Naive thymus-derived CD4-positive, alpha-beta T cell (primary cell): ENCODE measurements at regions of chr6 and their contacts with region 1.

Region 1: GRCh38 chr6:17599885-17600526 is at the start of gene FAM8A1:
- DNase-seq: peak; percentile 91 to 97 (median 94)
- ATAC-seq: peak; percentile 97
- H3K4me3 ChIP-seq: peak within 1 kb of the TSS; percentile 49
- H3K4me3 Mint-ChIP-seq: peak within 1 kb of the TSS; percentile 85 to 97 (median 94)
- H3K27ac ChIP-seq: peak within 1 kb of the TSS; percentile 94
- H3K27ac Mint-ChIP-seq: peak within 1 kb of the TSS; percentile 84 to 96 (median 93)
- H3K4me1 ChIP-seq: peaks cover 19 to 29% of the 10 kb centered on the region in 2 donors
- H3K4me1 Mint-ChIP-seq: peaks cover 29 to 48% (median 45%) of the 10 kb centered on the region in 7 donors
- H3K27me3 ChIP-seq: no peaks in the 10 kb centered on the region
- H3K27me3 Mint-ChIP-seq: no peaks in the 10 kb centered on the region
- total RNA-seq, gene FAM8A1: 8.0 to 26.1 (median 21.1) TPM

Region 2: DNA sequence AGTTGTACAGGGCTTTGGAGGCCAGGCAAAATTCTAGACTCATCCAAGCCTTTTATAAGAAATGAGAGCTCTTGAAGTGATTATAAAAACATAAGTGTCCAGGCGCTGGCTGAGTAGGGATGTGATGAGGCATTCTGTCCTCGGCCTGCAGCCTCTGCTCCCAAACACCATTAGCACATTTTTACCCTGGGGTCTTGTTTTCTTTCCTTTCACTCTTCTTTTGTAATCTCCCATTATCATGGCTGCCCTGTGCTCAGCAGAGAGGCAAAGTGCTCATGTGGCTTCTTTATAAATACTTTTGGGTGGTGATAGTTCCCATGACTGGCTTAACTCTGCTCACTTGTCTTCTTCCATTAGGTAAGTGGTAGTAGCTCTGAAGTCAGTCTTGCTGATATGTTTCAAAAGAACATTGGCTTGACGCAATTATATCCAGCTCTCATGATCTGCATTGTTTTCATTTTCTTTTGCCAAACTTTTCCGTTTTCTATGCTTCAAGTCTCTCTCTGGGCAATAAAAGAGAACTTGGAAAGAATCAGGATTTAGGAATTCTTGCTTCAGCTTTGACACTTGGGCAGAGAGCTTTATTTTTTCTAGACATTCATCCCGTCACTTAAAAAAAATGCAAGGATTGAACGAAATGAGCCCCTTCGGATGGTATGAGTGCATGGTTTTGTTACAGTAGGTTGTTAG is 145.5 kb before region 1 on chr6:
- CTCF ChIA-PET with region 1: no interaction called
- POLR2A ChIA-PET with region 1: no interaction called
- intact Hi-C with region 1: no loop called
- DNase-seq: no peak
- ATAC-seq: no peak
- H3K4me3 ChIP-seq: no peak overlapping the region
- H3K4me3 Mint-ChIP-seq: no peak overlapping the region
- H3K27ac ChIP-seq: no peak overlapping the region
- H3K27ac Mint-ChIP-seq: no peak overlapping the region
- H3K4me1 ChIP-seq: no peaks in the 10 kb centered on the region
- H3K4me1 Mint-ChIP-seq: peaks cover 0 to 3% (median 0%) of the 10 kb centered on the region in 7 donors
- H3K27me3 ChIP-seq: no peaks in the 10 kb centered on the region
- H3K27me3 Mint-ChIP-seq: peaks cover 0 to 49% (median 27%) of the 10 kb centered on the region in 5 donors

Region 3: DNA sequence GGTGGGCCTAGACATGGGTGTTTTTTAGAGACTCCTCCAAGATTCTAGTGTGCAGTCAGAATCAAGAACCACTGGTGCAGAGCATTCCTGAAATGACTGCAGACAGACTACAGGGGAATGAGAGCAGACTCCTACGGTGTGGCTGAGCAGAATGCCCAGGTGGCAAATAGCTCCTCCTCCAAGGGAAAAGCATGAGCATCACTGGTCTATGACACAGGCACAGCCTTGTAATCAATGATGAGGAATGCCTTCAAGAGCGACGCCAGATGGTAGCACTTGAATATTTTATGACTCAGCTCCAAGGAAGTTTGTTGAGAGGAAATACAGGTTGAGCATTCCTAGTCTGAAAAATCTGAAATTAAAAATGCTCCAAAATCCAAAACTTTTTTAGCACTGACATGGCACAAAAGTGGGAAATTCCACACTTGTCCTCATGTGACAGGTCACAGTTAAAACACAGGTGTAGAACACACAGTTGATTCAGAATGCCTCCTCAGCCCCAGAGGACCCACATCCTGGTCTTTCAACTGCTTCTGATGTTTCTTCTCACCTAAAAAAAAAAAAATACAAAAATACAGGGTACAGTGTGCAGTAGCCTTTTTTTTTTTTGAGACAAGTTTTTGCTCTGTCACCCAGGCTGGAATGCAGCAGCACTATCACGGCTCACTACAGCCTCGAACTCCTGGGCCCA is 10.5 kb before region 1 on chr6:
- CTCF ChIA-PET with region 1: interaction called, 14 read pairs
- POLR2A ChIA-PET with region 1: interaction called, 55 read pairs
- intact Hi-C with region 1: loop called in 1 of 2 experiments (anchors 1 kb)
- DNase-seq: peak in 7 of 9 donors; percentile 58 to 80 (median 74)
- ATAC-seq: peak; percentile 89
- H3K4me3 ChIP-seq: no peak overlapping the region
- H3K4me3 Mint-ChIP-seq: peak overlapping the region in 8 of 10 donors; percentile 39 to 74 (median 52)
- H3K27ac ChIP-seq: peak overlapping the region; percentile 3
- H3K27ac Mint-ChIP-seq: peak overlapping the region in 8 of 9 donors; percentile 43 to 93 (median 82)
- H3K4me1 ChIP-seq: peaks cover 0 to 18% of the 10 kb centered on the region in 2 donors
- H3K4me1 Mint-ChIP-seq: peaks cover 8 to 31% (median 21%) of the 10 kb centered on the region in 7 donors
- H3K27me3 ChIP-seq: no peaks in the 10 kb centered on the region
- H3K27me3 Mint-ChIP-seq: no peaks in the 10 kb centered on the region

Region 4: DNA sequence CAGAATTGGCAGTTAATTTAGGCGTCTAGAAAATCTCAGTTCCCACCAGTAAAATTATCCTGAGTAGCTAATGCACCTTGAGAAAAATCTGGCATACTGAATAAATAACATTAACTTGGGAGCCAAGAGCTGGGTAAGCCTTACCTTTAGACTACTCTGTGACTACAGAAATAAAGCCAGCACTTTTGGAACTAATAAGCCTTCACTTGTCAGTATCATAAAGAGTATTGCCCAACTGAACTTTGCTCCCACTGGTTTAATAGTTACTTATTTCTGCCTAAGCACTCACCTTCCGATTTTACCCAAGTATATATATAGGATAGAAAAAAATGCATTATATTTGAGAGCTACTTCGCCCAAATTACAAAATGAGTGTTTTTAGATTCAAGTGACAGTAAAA is 10.8 kb after region 1 on chr6:
- CTCF ChIA-PET with region 1: interaction called, 4 read pairs
- POLR2A ChIA-PET with region 1: interaction called, 27 read pairs
- intact Hi-C with region 1: loop called (anchors 1 kb)
- DNase-seq: no peak
- ATAC-seq: no peak
- H3K4me3 ChIP-seq: no peak overlapping the region
- H3K4me3 Mint-ChIP-seq: no peak overlapping the region
- H3K27ac ChIP-seq: no peak overlapping the region
- H3K27ac Mint-ChIP-seq: peak overlapping the region in 3 of 9 donors; percentile 0 to 40 (median 12)
- H3K4me1 ChIP-seq: no peaks in the 10 kb centered on the region
- H3K4me1 Mint-ChIP-seq: peaks cover 0 to 7% (median 4%) of the 10 kb centered on the region in 7 donors
- H3K27me3 ChIP-seq: no peaks in the 10 kb centered on the region
- H3K27me3 Mint-ChIP-seq: no peaks in the 10 kb centered on the region

Region 5: DNA sequence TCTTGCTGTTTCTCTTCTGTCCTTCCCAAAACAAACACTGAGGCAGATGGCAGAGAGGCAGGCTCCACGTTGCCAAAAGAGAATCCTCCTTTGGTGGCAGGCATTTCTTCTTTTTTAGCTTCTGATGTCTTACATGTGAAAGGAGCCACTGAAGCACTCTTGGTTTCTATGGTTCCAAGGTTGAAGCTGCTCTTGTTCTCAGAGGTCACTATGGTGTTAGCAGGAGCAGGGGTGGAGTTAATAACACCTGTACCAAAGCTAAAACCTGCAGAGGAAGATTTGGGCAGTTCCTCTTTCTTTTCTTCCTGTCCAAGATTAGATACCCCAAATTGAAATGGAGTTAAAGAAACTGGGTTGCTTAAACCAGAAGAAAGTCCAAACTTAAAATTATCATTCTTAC is 28.9 kb after region 1 on chr6:
- CTCF ChIA-PET with region 1: interaction called, 4 read pairs
- POLR2A ChIA-PET with region 1: interaction called, 4 read pairs
- intact Hi-C with region 1: loop called in 1 of 2 experiments (anchors 1 kb)
- DNase-seq: no peak
- ATAC-seq: no peak
- H3K4me3 ChIP-seq: no peak overlapping the region
- H3K4me3 Mint-ChIP-seq: no peak overlapping the region
- H3K27ac ChIP-seq: no peak overlapping the region
- H3K27ac Mint-ChIP-seq: peak overlapping the region in 8 of 9 donors; percentile 2 to 73 (median 28)
- H3K4me1 ChIP-seq: peaks cover 9 to 17% of the 10 kb centered on the region in 2 donors
- H3K4me1 Mint-ChIP-seq: peaks cover 28 to 50% (median 41%) of the 10 kb centered on the region in 7 donors
- H3K27me3 ChIP-seq: no peaks in the 10 kb centered on the region
- H3K27me3 Mint-ChIP-seq: no peaks in the 10 kb centered on the region

Region 6: GRCh38 chr6:17666646-17667045 is 66.6 kb after region 1 on chr6:
- CTCF ChIA-PET with region 1: interaction called, 4 read pairs
- POLR2A ChIA-PET with region 1: no interaction called
- intact Hi-C with region 1: loop called in 1 of 2 experiments (anchors 5 kb)
- DNase-seq: no peak
- ATAC-seq: no peak
- H3K4me3 ChIP-seq: no peak overlapping the region
- H3K4me3 Mint-ChIP-seq: peak overlapping the region in 1 of 10 donors; percentile 8
- H3K27ac ChIP-seq: no peak overlapping the region
- H3K27ac Mint-ChIP-seq: peak overlapping the region in 5 of 9 donors; percentile 13 to 92 (median 72)
- H3K4me1 ChIP-seq: peaks cover 0 to 13% of the 10 kb centered on the region in 2 donors
- H3K4me1 Mint-ChIP-seq: peaks cover 11 to 39% (median 27%) of the 10 kb centered on the region in 7 donors
- H3K27me3 ChIP-seq: no peaks in the 10 kb centered on the region
- H3K27me3 Mint-ChIP-seq: no peaks in the 10 kb centered on the region

Region 7: GRCh38 chr6:17700421-17701416 is 100.7 kb after region 1 on chr6:
- CTCF ChIA-PET with region 1: interaction called, 5 read pairs
- POLR2A ChIA-PET with region 1: interaction called, 44 read pairs
- intact Hi-C with region 1: no loop called
- DNase-seq: no peak
- ATAC-seq: no peak
- H3K4me3 ChIP-seq: no peak overlapping the region
- H3K4me3 Mint-ChIP-seq: peak overlapping the region in 7 of 10 donors; percentile 5 to 47 (median 29)
- H3K27ac ChIP-seq: peak overlapping the region; percentile 29
- H3K27ac Mint-ChIP-seq: peak overlapping the region in 8 of 9 donors; percentile 43 to 86 (median 59)
- H3K4me1 ChIP-seq: peaks cover 28% of the 10 kb centered on the region in 2 donors
- H3K4me1 Mint-ChIP-seq: peaks cover 21 to 81% (median 57%) of the 10 kb centered on the region in 7 donors
- H3K27me3 ChIP-seq: no peaks in the 10 kb centered on the region
- H3K27me3 Mint-ChIP-seq: no peaks in the 10 kb centered on the region